ENCODE measurements at regions of chr7 and their contacts with region 1.

Region 1: DNA sequence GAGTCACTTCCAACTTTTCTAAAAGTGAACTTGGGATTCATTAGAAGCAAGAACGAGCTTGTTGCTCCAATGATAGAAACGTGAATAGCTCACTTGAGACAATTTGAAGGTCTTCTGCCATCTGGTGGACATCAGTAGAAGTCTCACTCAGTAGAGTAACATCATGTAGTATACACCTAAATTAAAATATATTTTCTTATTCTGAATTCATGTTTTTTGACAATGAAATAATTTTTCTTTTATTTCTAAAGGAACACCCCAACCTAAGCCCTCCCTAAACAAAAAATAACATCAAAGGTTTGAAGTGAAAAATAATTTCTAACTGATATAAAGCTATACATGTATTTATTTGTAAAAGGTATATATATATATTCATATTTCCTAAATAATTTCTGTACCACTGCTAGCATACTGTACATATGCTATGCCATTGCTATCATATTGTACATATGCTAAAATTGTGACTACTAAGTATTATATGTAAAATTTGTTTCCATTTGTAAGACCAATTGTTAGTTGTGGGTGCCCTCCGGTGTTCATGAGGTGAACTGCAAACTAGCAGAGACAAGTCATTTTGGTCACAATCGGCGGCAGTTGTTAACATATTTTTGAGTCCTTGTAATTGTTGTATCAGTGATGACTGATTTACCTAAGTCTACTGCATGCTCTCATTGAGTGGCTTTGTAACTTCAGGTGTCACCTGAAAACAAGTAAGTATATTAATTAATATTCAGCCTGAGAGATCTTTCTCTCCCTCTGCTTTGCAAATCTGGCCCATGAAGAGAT is 121.9 kb downstream of the PTPRZ1 start:
- DNase-seq: peak; percentile 35 to 77 (median 42)
- ATAC-seq: peak; percentile 82 to 88
- H3K4me3 ChIP-seq: no peak overlapping the region
- H3K27ac ChIP-seq: no peak overlapping the region
- H3K4me1 ChIP-seq: no peaks in the 10 kb centered on the region
- H3K27me3 ChIP-seq: no peaks in the 10 kb centered on the region

Region 2: DNA sequence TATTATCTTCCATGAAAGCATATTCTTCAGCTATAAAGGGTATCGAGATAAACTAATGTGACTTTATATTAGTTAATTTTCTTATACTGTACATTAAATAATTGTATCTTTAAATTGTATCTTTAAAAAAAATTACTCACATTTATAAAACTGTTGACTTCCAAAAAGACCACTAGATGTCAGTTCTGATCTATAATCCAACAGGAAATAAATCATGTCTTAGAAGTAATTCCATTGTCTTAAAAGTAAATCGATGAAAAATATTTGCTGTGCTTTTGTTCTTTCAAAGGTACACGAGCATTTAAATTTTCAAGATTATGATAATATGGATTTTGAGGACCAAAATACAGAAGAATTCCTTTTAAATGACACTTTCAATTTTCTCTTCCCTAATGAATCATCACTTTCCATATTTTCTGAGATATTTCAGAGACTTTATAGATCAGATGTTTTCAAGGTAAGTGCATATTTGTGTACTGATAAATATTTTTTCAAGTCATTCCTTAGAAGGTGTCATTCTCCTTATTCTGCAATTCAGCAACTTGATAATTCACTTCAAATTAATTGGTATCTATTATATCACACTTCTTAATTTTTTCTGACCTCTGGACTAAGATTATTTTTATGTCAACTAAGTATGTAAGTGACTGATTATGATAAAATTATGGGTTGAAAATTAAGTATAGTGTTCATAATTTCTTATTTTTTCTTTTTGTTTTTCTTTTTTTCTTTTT is 867.9 kb before region 1 on chr7:
- intact Hi-C with region 1: loop called in 1 of 4 experiments (anchors 10 kb)
- DNase-seq: no peak
- ATAC-seq: no peak
- H3K4me3 ChIP-seq: no peak overlapping the region
- H3K27ac ChIP-seq: no peak overlapping the region
- H3K4me1 ChIP-seq: no peaks in the 10 kb centered on the region
- H3K27me3 ChIP-seq: no peaks in the 10 kb centered on the region

Region 3: DNA sequence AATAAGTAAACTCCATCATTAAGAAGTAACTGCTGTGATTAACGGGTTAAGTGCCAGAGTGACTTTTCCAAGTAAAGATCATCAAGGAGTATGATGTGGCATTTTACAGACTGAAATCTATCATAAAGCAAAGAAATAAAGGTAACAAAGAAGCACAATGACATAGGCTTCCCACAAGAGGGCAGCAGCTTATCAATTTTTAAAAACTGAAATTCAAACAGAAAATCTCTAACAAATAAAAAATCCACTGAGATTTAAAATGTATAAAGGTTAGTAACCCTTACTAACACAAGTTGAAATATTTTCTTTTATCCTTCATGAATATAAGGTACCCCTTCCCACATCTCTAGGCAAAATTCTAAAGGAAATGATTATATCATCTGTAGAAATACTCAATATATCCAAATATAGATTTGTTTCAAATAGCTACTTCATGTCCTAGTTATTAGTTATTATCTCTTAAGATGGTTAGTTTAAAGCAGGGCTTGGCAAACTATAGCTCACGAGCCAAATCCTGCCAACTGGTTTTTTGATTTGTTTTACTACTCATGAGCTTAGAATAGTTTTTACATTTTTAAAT is 627.9 kb before region 1 on chr7:
- intact Hi-C with region 1: loop called in 1 of 4 experiments (anchors 10 kb)
- DNase-seq: no peak
- ATAC-seq: no peak
- H3K4me3 ChIP-seq: no peak overlapping the region
- H3K27ac ChIP-seq: no peak overlapping the region
- H3K4me1 ChIP-seq: no peaks in the 10 kb centered on the region
- H3K27me3 ChIP-seq: no peaks in the 10 kb centered on the region

Region 4: GRCh38 chr7:121595758-121596696 is 398.8 kb before region 1 on chr7:
- intact Hi-C with region 1: loop called in 2 of 4 experiments (anchors 10 kb)
- DNase-seq: no peak
- ATAC-seq: no peak
- H3K4me3 ChIP-seq: no peak overlapping the region
- H3K27ac ChIP-seq: no peak overlapping the region
- H3K4me1 ChIP-seq: no peaks in the 10 kb centered on the region
- H3K27me3 ChIP-seq: no peaks in the 10 kb centered on the region

Region 5: GRCh38 chr7:121605317-121605680 is 389.5 kb before region 1 on chr7:
- intact Hi-C with region 1: loop called in 1 of 4 experiments (anchors 10 kb)
- DNase-seq: no peak
- ATAC-seq: peak; percentile 10 to 42
- H3K4me3 ChIP-seq: no peak overlapping the region
- H3K27ac ChIP-seq: no peak overlapping the region
- H3K4me1 ChIP-seq: peaks cover under 1% of the 10 kb centered on the region
- H3K27me3 ChIP-seq: no peaks in the 10 kb centered on the region

Measured in right cardiac atrium (tissue), 5 donors.